ENCODE measurements at regions of chr11 and their contacts with region 1.

Region 1: GRCh38 chr11:69359735-69360480 is 66.0 kb downstream of the MYEOV start:
- DNase-seq: no peak
- H3K4me3 Mint-ChIP-seq: no peak overlapping the region
- H3K27ac Mint-ChIP-seq: no peak overlapping the region
- H3K4me1 Mint-ChIP-seq: no peaks in the 10 kb centered on the region
- H3K27me3 Mint-ChIP-seq: peaks cover 3% of the 10 kb centered on the region

Region 2: GRCh38 chr11:68905421-68906360 is 454.2 kb before region 1 on chr11:
- intact Hi-C with region 1: no loop called
- DNase-seq: no peak
- H3K4me3 Mint-ChIP-seq: peak overlapping the region; percentile 96
- H3K27ac Mint-ChIP-seq: no peak overlapping the region
- H3K4me1 Mint-ChIP-seq: peaks cover 42% of the 10 kb centered on the region
- H3K27me3 Mint-ChIP-seq: no peaks in the 10 kb centered on the region

Region 3: DNA sequence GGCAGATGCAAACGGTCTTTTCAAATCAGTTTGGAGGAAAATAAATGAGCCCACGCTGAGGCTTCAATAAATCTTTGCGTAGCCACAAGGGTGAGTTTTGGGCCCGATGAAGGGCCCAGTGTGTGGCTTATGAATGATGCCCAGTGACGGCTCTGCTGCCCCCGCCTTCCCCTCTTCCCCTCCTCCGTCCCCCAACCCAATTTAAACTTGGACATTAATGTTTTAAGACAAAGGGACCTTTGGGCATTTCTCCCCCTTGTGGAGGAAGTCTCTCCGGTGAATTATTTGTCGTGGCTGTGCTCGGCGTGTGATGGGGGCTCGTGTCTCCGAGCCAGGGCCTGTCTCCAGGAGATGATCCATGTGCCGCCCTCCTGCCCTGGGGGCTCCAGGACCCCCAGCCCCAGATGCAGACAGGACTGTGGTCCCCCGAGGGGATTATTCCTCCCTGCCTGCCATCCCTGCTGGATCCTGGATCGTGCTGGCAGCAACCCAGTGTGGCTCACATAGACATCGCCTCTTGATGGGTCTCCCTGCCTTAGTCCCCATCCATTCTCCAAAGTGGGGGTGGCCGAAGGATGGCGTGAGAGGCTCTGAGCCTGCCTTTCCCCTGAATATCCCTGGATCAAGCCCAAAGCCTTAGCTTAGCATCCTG is 147.9 kb before region 1 on chr11:
- intact Hi-C with region 1: no loop called
- DNase-seq: no peak
- H3K4me3 Mint-ChIP-seq: no peak overlapping the region
- H3K27ac Mint-ChIP-seq: no peak overlapping the region
- H3K4me1 Mint-ChIP-seq: peaks cover 22% of the 10 kb centered on the region
- H3K27me3 Mint-ChIP-seq: no peaks in the 10 kb centered on the region

Region 4: DNA sequence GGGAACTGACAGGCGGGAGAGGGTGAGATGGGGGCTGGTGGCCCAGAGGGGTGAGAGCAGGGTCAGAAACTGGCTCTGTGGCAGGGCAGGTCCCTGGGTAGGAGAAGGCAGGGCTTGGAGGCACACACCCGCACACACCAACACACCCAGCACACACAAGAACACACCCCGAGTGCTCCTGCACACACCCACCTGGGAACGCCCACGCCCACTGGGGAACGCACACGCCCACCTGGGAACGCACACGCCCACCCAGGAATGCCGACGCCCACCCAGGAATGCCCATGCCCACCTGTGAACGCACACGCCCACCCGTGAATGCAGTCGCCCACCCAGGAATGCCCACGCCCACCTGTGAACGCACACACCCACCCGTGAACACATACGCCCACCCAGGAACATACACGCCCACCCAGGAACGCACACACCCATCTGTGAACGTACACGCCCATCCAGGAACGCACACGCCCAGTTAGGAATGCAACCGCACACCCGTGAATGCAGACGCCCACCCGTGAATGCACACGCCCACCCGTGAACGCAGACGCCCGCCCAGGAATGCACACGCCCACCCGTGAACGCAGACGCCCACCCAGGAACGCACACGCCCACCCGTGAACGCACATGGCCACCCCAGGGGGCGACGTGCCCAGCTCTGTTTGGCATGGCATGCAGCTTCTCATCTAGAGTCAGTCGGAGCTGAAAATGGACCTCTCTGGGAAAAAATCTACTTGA is 17.1 kb after region 1 on chr11:
- intact Hi-C with region 1: loop called (anchors 1 kb)
- DNase-seq: no peak
- H3K4me3 Mint-ChIP-seq: no peak overlapping the region
- H3K27ac Mint-ChIP-seq: no peak overlapping the region
- H3K4me1 Mint-ChIP-seq: no peaks in the 10 kb centered on the region
- H3K27me3 Mint-ChIP-seq: no peaks in the 10 kb centered on the region

Region 5: DNA sequence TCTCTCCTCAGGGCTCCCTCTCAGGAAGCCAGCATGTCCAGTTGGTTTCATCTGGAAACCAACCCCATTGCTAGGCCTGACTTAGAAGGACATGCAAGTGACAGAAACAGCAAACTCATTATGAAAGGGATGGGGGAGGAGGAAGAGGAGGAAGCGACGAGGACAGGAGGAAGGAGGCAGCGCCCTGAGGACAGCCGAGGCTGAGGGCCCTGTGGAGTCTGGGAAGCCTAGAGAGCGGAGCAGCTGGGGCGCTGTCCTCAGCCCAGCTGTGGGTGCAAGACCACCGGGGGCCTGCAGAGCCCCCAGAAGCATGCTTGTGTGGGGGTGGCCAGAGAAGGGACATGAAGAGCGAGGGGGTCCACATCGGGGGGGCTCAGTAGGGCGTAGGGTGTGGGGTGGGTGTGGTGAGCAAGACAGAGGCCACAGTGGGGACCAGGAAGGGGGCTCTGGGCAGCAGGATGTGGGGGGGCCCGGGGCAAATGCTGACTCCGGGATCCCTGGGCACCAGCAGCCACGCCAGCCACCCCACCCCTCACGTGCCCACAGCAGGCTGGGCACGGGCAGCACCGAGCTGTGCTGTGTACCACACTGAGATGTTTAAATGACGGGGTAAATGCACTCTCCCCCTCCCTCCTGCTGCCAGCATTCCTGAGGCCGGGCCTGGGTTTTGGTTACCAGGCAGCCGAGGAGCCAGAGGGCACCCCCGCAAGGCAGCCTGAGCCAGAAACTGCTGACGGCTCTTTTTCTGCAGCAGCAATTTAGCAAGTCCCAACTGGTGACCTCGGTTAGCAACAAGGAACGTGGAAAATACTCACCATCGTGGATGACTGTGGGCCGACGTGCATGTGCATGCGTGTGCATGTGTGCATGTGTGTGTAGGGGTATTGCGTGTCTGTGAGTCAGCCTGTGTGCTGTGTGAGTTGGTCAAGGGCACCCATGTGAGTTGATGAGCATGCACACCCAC is 38.9 kb after region 1 on chr11:
- intact Hi-C with region 1: no loop called
- DNase-seq: no peak
- H3K4me3 Mint-ChIP-seq: no peak overlapping the region
- H3K27ac Mint-ChIP-seq: no peak overlapping the region
- H3K4me1 Mint-ChIP-seq: peaks cover 9% of the 10 kb centered on the region
- H3K27me3 Mint-ChIP-seq: no peaks in the 10 kb centered on the region